ENCODE measurements at regions of chr20 and their contacts with region 1.

Region 1: DNA sequence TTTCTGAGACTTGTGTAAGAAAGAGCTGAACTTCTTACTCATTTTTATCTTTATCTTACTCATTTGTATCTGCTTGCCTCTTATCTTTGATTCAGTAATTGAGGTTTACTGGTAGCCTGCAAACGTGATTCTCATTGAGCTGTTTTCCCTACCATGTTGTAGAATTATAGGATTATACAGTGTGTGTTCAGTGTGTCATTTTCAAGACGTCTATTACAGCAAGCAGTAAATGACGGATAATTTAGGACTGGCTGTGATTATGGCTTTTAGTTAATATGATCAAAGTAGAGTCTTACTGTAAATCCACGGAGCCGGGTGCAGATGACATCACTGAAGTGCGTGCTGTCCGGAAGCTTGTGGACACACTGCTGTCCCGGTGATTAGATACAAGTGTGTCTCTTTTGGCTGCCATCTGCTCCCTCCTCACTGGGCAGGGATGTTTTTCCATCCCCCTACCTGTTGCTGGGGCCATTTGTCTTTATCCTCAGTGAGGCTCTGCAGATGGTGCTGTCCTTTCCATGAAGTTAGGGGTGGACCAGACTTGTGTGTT is 6.0 kb downstream of the NELFCD start:
- DNase-seq: no peak
- ATAC-seq: peak; percentile 29 to 31

Region 2: DNA sequence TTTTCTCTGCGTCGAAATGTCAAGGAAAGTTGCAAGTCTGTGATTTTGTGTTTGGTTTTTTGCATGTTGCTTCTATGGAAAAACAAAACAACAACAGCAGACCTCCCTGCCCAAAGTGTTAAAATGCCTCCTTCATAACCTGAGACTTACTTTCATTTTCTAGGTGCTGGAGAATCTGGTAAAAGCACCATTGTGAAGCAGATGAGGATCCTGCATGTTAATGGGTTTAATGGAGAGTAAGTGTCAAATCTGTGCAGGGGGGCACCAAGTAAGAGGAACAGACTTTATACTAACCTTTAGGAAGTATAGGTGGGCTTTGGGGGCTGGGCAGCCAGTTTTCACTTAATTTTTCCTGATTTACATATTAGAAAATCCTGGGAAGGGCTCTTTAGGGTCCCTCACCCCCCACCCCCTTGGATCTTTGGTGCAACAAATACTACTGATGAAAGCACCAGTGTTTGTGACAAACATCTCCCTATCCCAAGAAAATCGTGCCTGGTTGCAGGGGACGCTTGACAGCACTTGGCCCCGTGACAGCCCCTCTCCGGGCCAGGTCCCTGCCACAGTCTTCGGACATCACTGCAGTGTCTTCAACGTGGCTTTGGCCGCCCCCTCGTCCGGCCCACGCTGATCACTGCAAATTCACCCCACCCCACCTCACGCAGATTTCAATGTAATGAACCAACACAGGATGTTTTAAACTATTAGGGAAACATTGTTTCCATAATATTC is 91.4 kb before region 1 on chr20:
- intact Hi-C with region 1: loop called (anchors 5 to 10 kb)
- DNase-seq: no peak
- ATAC-seq: no peak

Region 3: GRCh38 chr20:59032023-59032712 is 45.1 kb after region 1 on chr20 and contains the start of gene ATP5F1E:
- intact Hi-C with region 1: loop called in 1 of 2 experiments (anchors 2 kb)
- DNase-seq: peak; percentile 98
- ATAC-seq: peak; percentile 100
- total RNA-seq, gene ATP5F1E: 122 to 125 TPM

Region 4: GRCh38 chr20:59120491-59120890 is 133.4 kb after region 1 on chr20:
- intact Hi-C with region 1: no loop called
- DNase-seq: no peak
- ATAC-seq: no peak

Measured in left cardiac atrium (tissue), 4 donors.